AG04449 (cell line): ENCODE measurements at regions of chr10 and their contacts with region 1.

Region 1: DNA sequence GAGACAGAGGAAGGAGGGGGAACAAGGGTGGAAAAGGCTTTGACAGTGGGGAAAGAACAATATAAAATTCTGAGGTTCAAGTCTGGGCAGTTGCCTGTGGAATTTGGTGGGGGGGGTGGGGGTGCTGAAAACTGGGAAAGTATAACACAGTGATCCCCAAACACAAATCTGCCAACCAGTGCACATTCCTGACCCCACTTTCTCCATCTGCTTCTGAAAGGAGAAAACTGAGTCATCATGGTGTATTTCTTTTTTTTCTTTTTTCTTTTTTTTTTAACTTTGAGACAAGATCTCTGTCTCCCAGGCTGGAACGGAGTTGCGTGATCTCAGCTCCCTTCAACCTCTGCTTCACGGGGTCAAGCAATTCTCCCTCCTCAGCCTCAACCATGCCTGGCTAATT is 4.4 kb upstream of the ITIH5 start:
- DNase-seq: no peak
- H3K4me3 ChIP-seq: no peak overlapping the region
- CTCF ChIP-seq: no peak

Region 2: DNA sequence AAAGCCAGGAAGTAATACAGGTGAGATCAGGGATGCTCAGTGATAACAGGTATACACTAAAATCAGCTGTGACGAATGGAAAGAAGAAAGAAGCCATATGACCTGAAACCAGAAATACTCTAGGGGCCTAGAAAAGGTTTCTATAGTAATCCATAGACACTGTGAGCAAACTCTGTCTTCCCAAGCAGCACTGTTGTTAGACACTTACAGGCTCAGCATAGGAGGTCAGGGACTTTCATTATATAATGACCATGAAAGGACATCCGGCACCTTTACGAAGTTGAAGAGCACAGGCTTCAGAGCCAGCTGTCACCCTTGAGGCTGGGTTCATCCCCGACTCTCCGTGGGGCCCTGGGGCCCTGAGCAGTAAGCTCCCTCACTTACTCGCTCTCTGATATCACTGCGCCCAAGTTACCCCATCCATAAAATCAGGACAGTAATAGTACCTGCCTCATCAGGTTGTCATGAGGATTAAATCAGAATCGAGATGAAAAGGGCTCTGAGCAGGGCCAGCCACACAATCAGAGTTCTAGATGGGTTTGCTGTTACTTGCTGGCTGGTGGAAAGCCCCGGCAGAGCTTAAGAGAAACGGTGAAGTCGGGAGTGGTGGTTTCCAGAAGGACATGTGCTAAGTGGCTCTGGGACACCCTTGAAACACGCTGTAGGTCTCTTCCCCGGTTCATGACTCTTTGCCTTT is 83.8 kb before region 1 on chr10:
- CTCF ChIA-PET with region 1: no interaction called
- POLR2A ChIA-PET with region 1: no interaction called
- DNase-seq: no peak
- H3K4me3 ChIP-seq: no peak overlapping the region
- CTCF ChIP-seq: no peak

Region 3: DNA sequence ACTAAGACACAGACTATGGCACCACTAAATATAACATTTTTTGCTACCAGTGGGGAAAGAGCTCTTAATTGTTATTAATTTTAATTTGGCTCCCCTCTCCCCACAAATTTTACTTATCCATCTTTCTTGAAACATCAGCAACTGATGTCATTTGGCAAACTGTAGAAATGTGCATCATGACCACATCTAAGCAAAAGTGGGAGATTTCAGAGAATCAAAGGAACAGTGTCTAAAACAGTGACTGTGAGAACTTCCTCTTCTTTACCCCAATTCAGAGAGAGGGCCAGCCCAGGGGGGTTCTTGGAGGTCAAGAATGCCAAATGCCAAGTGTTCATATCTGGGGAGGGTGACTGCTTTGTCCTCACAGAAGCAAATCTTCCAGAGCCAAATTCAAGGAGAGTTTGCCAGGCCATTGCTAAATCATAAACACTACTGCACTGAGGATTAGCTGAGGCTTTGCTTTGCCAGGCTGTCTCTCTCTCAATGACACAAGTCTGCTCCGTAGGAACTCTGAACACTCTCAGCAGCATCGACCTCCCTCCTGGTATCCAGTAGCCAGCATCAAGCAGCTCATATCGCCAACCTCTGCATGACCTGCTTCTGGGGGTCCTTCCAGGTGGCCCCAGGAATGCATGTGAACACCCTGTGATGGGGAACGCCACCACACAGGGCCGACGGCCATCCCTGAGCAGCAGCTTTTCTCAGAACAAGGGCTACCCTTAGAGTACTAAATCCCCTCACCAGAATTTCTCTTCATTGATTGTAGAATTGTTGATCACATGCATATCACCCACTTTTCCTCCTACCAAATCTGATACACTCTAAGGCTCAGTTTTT is 69.9 kb before region 1 on chr10:
- CTCF ChIA-PET with region 1: no interaction called
- POLR2A ChIA-PET with region 1: no interaction called
- DNase-seq: no peak
- H3K4me3 ChIP-seq: no peak overlapping the region
- CTCF ChIP-seq: no peak

Region 4: DNA sequence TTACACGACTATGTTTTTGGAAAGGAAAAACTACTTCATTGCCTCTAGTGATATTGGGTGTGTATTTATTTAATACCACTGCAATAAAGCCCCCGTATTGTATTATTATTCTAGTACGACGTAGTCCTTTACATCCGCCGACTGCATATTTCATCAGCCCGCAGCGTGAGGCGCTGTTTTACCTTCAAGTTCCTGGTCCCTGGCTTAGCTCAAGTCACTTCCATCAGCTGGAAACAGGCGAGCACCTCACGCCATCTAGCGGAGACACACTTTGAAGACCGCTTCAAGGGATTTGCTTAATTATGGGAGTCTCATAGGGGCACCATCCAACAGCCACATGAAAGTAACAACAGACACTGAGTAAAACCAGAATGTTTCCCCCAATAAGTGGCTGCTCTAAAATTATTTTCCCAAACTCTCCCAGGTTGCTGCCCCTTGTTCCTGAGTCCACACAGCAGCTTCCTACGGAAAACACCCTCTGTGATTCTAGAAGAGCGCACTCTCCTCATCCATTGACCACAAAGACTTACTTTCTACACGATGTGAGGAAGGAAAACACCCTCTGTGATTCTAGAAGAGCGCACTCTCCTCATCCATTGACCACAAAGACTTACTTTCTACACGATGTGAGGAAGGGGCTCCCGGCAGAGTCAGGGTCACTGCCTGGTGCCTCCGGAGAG is 16.2 kb after region 1 on chr10:
- CTCF ChIA-PET with region 1: interaction called, 13 read pairs
- POLR2A ChIA-PET with region 1: no interaction called
- DNase-seq: peak; percentile 28
- H3K4me3 ChIP-seq: no peak overlapping the region
- CTCF ChIP-seq: peak; percentile 81